ENCODE measurements at regions of chr10 and their contacts with region 1.

Region 1: GRCh38 chr10:132353456-132354355 is 21.7 kb downstream of the LRRC27 start:
- DNase-seq: peak; percentile 60
- H3K4me3 ChIP-seq: no peak overlapping the region
- H3K27ac ChIP-seq: no peak overlapping the region
- H3K4me1 ChIP-seq: no peaks in the 10 kb centered on the region
- H3K27me3 ChIP-seq: no peaks in the 10 kb centered on the region
- CTCF ChIP-seq: no peak
- EP300 ChIP-seq: no peak
- POLR2A ChIP-seq: no peak

Region 2: DNA sequence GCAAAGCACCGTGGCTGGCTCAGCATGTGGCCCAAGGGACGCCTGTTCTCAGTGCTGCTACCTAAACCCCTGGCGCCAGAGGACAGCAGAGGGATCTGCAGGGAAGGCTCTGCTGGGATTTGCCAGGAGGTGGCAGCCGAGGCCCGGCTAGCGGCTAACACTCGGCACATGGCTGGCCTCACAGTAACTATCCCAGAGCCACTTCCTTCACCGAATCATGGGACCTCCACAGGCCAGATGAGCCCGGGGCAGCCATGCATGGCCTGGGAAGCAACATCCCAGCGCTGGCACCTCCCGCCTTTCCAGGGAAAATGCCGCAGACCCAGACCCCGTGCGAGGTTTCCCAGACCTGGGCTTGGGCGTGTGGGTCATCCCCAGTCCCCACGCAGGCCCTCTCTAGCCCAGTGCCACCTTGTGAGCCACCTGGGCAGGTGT is 130.5 kb before region 1 on chr10:
- intact Hi-C with region 1: loop called (anchors 1 kb)
- DNase-seq: peak; percentile 90
- H3K4me3 ChIP-seq: no peak overlapping the region
- H3K27ac ChIP-seq: no peak overlapping the region
- H3K4me1 ChIP-seq: peaks cover 0 to 8% (median 2%) of the 10 kb centered on the region in 4 donors
- H3K27me3 ChIP-seq: no peaks in the 10 kb centered on the region
- CTCF ChIP-seq: peak; percentile 76 to 94 (median 92)
- EP300 ChIP-seq: no peak
- POLR2A ChIP-seq: no peak